ENCODE measurements at regions of chr18 and their contacts with region 1.

Region 1: GRCh38 chr18:67217551-67218166 is 298.9 kb downstream of the DSEL start:
- DNase-seq: peak; percentile 56 to 64 (median 63)
- H3K4me3 ChIP-seq: no peak overlapping the region
- H3K4me3 Mint-ChIP-seq: no peak overlapping the region
- H3K27ac ChIP-seq: no peak overlapping the region
- H3K27ac Mint-ChIP-seq: no peak overlapping the region
- H3K4me1 ChIP-seq: no peaks in the 10 kb centered on the region
- H3K4me1 Mint-ChIP-seq: no peaks in the 10 kb centered on the region
- H3K27me3 ChIP-seq: no peaks in the 10 kb centered on the region
- H3K27me3 Mint-ChIP-seq: peaks cover 3 to 4% of the 10 kb centered on the region in 2 donors

Region 2: GRCh38 chr18:66916834-66917233 is 300.8 kb before region 1 on chr18:
- CTCF ChIA-PET with region 1: no interaction called
- POLR2A ChIA-PET with region 1: no interaction called
- intact Hi-C with region 1: no loop called
- DNase-seq: no peak
- H3K4me3 ChIP-seq: no peak overlapping the region
- H3K4me3 Mint-ChIP-seq: no peak overlapping the region
- H3K27ac ChIP-seq: no peak overlapping the region
- H3K27ac Mint-ChIP-seq: no peak overlapping the region
- H3K4me1 ChIP-seq: no peaks in the 10 kb centered on the region
- H3K4me1 Mint-ChIP-seq: no peaks in the 10 kb centered on the region
- H3K27me3 ChIP-seq: no peaks in the 10 kb centered on the region
- H3K27me3 Mint-ChIP-seq: no peaks in the 10 kb centered on the region

Region 3: GRCh38 chr18:67232406-67232805 is 14.7 kb after region 1 on chr18:
- CTCF ChIA-PET with region 1: interaction called, 11 read pairs
- POLR2A ChIA-PET with region 1: no interaction called
- intact Hi-C with region 1: no loop called
- DNase-seq: no peak
- H3K4me3 ChIP-seq: no peak overlapping the region
- H3K4me3 Mint-ChIP-seq: no peak overlapping the region
- H3K27ac ChIP-seq: no peak overlapping the region
- H3K27ac Mint-ChIP-seq: no peak overlapping the region
- H3K4me1 ChIP-seq: no peaks in the 10 kb centered on the region
- H3K4me1 Mint-ChIP-seq: no peaks in the 10 kb centered on the region
- H3K27me3 ChIP-seq: no peaks in the 10 kb centered on the region
- H3K27me3 Mint-ChIP-seq: no peaks in the 10 kb centered on the region

Region 4: DNA sequence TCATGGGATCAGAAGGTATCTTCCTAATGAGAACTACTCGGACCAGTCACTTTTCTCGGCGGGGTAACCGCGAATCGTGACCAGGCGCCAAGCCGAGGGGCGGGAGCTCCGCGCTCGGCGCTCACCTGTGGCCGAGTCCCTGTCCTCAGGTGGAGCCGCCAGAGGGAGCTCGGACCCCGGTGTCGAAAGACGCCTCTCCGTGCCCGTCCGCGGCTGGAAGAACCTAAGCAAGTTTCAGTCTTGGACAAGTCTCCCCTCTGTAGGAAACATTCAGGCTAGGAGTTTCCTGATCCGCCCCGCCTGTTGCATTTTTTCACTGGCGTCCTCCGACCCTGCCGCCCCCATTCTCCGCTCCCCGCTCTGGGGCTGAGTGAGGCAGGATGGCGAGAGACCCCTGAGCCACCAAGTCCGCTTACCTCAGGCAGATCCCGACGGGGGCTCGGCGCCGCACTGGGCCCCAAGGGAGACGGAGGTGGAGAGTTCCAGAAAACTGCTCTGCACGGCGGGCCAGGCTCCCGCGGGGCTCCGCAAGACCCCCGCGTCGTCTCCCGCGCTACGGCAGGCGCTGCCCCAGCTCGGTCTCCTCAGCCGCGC is 298.4 kb after region 1 on chr18:
- CTCF ChIA-PET with region 1: interaction called, 4 read pairs
- POLR2A ChIA-PET with region 1: no interaction called
- intact Hi-C with region 1: loop called (anchors 1 kb)
- DNase-seq: peak; percentile 36 to 62 (median 44)
- H3K4me3 ChIP-seq: peak overlapping the region; percentile 58 to 59
- H3K4me3 Mint-ChIP-seq: peak overlapping the region; percentile 87 to 94 (median 92)
- H3K27ac ChIP-seq: peak overlapping the region; percentile 36
- H3K27ac Mint-ChIP-seq: peak overlapping the region in 6 of 7 donors; percentile 1 to 90 (median 86)
- H3K4me1 ChIP-seq: peaks cover 16% of the 10 kb centered on the region
- H3K4me1 Mint-ChIP-seq: peaks cover 14 to 30% (median 22%) of the 10 kb centered on the region in 4 donors
- H3K27me3 ChIP-seq: no peaks in the 10 kb centered on the region
- H3K27me3 Mint-ChIP-seq: no peaks in the 10 kb centered on the region

Region 5: GRCh38 chr18:68072744-68073143 is 855.1 kb after region 1 on chr18:
- CTCF ChIA-PET with region 1: no interaction called
- POLR2A ChIA-PET with region 1: no interaction called
- intact Hi-C with region 1: no loop called
- DNase-seq: no peak
- H3K4me3 ChIP-seq: no peak overlapping the region
- H3K4me3 Mint-ChIP-seq: no peak overlapping the region
- H3K27ac ChIP-seq: no peak overlapping the region
- H3K27ac Mint-ChIP-seq: no peak overlapping the region
- H3K4me1 ChIP-seq: no peaks in the 10 kb centered on the region
- H3K4me1 Mint-ChIP-seq: no peaks in the 10 kb centered on the region
- H3K27me3 ChIP-seq: no peaks in the 10 kb centered on the region
- H3K27me3 Mint-ChIP-seq: no peaks in the 10 kb centered on the region

Region 6: GRCh38 chr18:68623342-68623741 is 1405.7 kb after region 1 on chr18:
- CTCF ChIA-PET with region 1: no interaction called
- POLR2A ChIA-PET with region 1: no interaction called
- intact Hi-C with region 1: loop called (anchors 2 kb)
- DNase-seq: peak in 4 of 5 donors; percentile 8 to 15 (median 11)
- H3K4me3 ChIP-seq: no peak overlapping the region
- H3K4me3 Mint-ChIP-seq: no peak overlapping the region
- H3K27ac ChIP-seq: no peak overlapping the region
- H3K27ac Mint-ChIP-seq: no peak overlapping the region
- H3K4me1 ChIP-seq: no peaks in the 10 kb centered on the region
- H3K4me1 Mint-ChIP-seq: no peaks in the 10 kb centered on the region
- H3K27me3 ChIP-seq: no peaks in the 10 kb centered on the region
- H3K27me3 Mint-ChIP-seq: peaks cover 0 to 19% of the 10 kb centered on the region in 2 donors

Region 7: DNA sequence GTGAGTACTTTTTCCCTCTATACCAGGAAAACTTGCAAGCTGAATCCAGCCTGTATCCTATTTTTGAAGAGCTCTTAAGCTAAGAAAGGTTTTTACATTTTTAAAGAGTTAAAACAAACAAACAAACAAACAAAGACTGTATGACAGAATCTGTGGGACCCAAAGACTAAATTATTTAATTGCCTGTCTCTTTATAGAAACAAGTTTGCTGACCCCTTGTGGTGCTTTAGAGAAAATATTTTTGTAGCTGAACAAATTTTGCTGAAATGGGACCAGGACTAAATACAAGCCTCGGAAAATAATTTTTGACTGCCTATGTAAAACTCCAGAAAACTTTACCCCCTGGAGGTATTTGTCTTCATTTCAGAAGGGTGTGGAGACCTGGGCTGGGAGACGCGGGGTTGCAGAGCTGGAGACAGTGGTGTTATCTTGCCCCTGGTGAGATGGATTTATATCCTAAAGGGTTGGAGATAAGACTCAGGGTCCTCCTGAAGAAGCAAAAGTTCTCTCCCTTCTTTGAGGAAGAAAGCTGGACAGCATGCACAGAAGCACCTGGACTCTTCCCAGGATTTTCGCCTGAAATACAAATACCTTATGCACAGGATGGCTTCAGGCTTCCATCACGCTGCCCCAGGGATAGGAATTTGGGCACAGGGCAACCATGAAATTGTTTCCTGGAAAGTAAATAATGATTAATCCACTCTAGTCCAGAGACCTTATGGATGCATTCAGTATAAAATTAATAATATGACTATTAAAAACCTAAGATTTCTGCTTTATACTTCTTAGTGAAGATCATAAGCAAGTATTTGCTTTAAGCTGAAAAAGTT is 1442.9 kb after region 1 on chr18:
- CTCF ChIA-PET with region 1: interaction called, 29 read pairs
- POLR2A ChIA-PET with region 1: no interaction called
- intact Hi-C with region 1: loop called (anchors 1 kb)
- DNase-seq: peak in 4 of 5 donors; percentile 18 to 31 (median 27)
- H3K4me3 ChIP-seq: no peak overlapping the region
- H3K4me3 Mint-ChIP-seq: no peak overlapping the region
- H3K27ac ChIP-seq: no peak overlapping the region
- H3K27ac Mint-ChIP-seq: no peak overlapping the region
- H3K4me1 ChIP-seq: no peaks in the 10 kb centered on the region
- H3K4me1 Mint-ChIP-seq: no peaks in the 10 kb centered on the region
- H3K27me3 ChIP-seq: no peaks in the 10 kb centered on the region
- H3K27me3 Mint-ChIP-seq: peaks cover 0 to 1% of the 10 kb centered on the region in 2 donors

Region 8: GRCh38 chr18:68735483-68736343 is 1518.1 kb after region 1 on chr18:
- CTCF ChIA-PET with region 1: no interaction called
- POLR2A ChIA-PET with region 1: no interaction called
- intact Hi-C with region 1: loop called (anchors 1 kb)
- DNase-seq: peak in 4 of 5 donors; percentile 17 to 32 (median 26)
- H3K4me3 ChIP-seq: no peak overlapping the region
- H3K4me3 Mint-ChIP-seq: no peak overlapping the region
- H3K27ac ChIP-seq: no peak overlapping the region
- H3K27ac Mint-ChIP-seq: no peak overlapping the region
- H3K4me1 ChIP-seq: no peaks in the 10 kb centered on the region
- H3K4me1 Mint-ChIP-seq: peaks cover 0 to 6% (median 1%) of the 10 kb centered on the region in 4 donors
- H3K27me3 ChIP-seq: no peaks in the 10 kb centered on the region
- H3K27me3 Mint-ChIP-seq: peaks cover 0 to 1% of the 10 kb centered on the region in 2 donors